Head of caudate nucleus (tissue), 42 donors: ENCODE measurements at regions of chr11 and their contacts with region 1.

Region 1: DNA sequence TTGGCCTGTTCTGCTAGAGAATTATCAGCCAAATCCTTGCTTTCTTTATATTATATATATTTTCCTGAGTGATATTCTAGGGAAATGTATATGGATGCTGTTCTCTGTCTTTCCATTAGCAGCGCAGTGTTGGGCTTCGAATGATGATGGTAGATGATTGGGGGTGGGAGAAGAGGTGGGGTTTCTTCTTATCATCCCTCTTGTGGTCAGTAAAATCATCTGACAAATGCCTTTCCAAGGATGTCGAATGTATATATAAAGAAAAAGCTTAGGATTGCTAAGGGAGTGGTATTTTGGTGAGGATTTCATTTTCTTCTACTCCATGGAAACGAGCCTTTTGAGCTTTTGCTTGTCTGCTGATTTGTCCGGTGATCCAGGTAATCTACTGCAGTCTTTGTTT is 48.9 kb downstream of the ARHGEF12 start:
- DNase-seq: peak in 21 of 42 donors; percentile 3 to 66 (median 22)

Region 2: DNA sequence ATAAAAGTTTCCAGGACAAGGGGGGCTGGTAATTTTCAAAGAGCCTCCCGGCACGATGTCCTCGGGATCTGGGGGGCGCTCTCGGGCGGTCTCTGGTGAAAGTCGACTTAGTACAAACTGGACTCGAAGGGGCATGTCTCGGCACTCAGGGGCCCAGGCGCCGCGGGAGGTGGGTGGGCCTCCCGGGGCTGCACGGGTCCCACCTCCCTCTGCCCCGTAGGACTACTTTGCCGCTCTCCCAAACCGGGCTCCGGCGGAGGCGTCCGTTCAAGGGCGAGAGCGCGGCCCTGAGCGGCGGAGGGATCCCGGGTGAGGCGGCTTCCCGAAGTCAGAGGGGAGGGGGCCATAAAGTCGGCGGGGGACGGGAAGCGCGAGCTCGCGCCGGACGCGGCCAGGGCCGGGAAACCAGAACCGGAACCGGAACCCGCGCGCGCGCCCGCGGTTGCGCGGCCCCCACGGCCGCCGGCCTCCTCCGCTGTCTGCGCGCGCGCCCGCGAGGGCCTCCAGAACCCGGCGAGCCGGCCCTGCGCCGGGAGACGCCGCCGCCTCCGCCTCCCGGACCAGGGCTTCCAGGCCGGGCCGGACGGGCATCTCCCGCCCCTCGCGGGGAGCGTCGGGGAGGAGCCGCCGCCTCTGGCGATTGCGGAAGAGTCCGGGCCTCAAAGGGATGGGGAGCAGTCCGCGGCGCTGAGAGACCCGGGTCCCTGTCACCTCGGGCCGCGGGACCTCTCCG is 49.0 kb before region 1 on chr11 and contains the start of gene ARHGEF12:
- intact Hi-C with region 1: loop called (anchors 10 kb)
- DNase-seq: peak; percentile 74 to 97 (median 94)

Region 3: GRCh38 chr11:120590472-120590871 is 205.4 kb after region 1 on chr11:
- intact Hi-C with region 1: no loop called
- DNase-seq: no peak

Region 4: GRCh38 chr11:120622189-120622875 is 237.2 kb after region 1 on chr11:
- intact Hi-C with region 1: no loop called
- DNase-seq: no peak